ENCODE measurements at regions of chr14 and their contacts with region 1.

Region 1: DNA sequence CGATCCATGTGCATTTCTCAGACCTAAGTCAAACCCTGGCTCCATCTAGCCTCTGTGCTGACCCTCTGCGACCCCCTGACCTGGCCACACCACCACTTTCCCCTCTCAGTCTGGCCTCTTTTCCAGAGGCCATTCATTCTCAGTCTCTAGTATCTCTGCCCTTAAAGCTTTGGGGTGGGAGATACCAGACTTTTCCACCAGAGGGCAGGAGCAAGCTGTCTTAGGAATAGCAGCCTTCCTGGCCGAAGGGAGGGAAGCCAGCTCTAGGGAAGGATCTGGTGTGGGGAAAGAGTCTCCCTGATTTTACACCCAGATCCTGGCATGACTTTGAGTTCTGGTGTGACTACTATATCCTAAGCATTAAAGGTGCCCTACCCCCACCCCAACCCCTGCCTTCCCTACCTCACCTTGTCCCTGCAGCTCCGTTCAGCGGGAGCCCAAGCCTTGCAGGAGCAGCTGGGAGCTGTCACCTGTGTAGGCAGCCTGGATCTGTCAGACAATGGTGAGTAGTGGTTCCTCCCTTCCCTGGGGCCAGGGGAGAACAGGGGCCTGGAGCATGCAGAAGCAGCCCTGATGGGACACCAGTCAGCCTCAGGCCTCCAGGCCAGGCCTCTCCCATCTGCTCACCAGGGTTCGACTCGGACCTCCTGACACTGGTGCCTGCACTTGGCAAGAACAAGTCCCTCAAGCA is 6.6 kb downstream of the CARMIL3 start:
- DNase-seq: peak; percentile 22 to 70 (median 49)
- ATAC-seq: peak; percentile 84
- H3K4me3 ChIP-seq: no peak overlapping the region
- H3K4me3 Mint-ChIP-seq: no peak overlapping the region
- H3K27ac ChIP-seq: no peak overlapping the region
- H3K27ac Mint-ChIP-seq: peak overlapping the region in 5 of 9 donors; percentile 22 to 80 (median 67)
- H3K4me1 ChIP-seq: no peaks in the 10 kb centered on the region
- H3K4me1 Mint-ChIP-seq: peaks cover 0 to 8% (median 2%) of the 10 kb centered on the region in 7 donors
- H3K27me3 ChIP-seq: no peaks in the 10 kb centered on the region
- H3K27me3 Mint-ChIP-seq: peaks cover 0 to 8% (median 2%) of the 10 kb centered on the region in 5 donors

Region 2: DNA sequence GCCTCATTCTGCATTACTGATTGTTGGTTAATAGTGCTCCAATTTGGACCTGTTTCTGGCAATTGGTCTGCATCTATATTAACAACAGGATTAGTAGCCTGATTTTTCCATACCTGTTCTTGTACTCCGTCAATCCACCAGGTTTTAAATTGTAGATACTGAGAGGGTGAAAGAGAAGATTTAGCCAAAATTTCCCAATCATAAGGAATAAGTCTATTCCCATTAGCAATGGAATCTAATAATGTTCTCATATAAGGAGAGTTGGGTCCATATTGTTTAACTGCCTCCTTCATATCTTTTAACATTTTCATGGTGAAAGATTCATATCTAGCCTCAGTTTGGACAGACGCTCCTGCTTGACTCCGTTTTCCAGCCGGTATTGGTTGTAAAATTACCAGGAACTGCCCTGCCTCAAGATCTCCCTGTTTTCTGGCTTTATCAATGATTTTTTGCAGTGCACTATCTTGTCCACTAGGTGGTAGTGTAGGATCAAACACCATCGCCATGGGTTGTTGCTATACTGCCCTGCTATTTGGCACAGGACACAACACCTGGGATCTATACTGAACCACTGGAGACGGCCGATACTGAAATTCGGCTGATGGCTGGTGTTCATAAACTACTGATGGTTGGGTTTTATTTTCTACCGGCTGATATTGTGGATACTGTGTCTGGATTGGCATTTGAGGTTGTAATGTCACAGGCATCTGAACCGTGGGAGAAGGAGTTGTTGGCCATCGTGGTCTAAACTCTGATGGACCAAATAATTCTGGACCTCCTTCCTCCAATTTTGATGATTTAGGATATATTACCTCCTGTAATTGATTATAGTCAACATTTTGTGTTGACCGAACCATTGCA is 44.5 kb before region 1 on chr14:
- CTCF ChIA-PET with region 1: interaction called, 3 read pairs
- POLR2A ChIA-PET with region 1: no interaction called
- intact Hi-C with region 1: loop called in 1 of 2 experiments (anchors 1 kb)
- DNase-seq: peak in 8 of 9 donors; percentile 17 to 76 (median 67)
- ATAC-seq: peak; percentile 94
- H3K4me3 ChIP-seq: no peak overlapping the region
- H3K4me3 Mint-ChIP-seq: no peak overlapping the region
- H3K27ac ChIP-seq: no peak overlapping the region
- H3K27ac Mint-ChIP-seq: no peak overlapping the region
- H3K4me1 ChIP-seq: peaks cover 0 to 6% of the 10 kb centered on the region in 2 donors
- H3K4me1 Mint-ChIP-seq: peaks cover 8 to 28% (median 25%) of the 10 kb centered on the region in 7 donors
- H3K27me3 ChIP-seq: no peaks in the 10 kb centered on the region
- H3K27me3 Mint-ChIP-seq: peaks cover 0 to 15% (median 0%) of the 10 kb centered on the region in 5 donors

Region 3: GRCh38 chr14:24123508-24124417 is 65.4 kb after region 1 on chr14:
- CTCF ChIA-PET with region 1: no interaction called
- POLR2A ChIA-PET with region 1: no interaction called
- intact Hi-C with region 1: no loop called
- DNase-seq: no peak
- ATAC-seq: peak; percentile 38
- H3K4me3 ChIP-seq: no peak overlapping the region
- H3K4me3 Mint-ChIP-seq: no peak overlapping the region
- H3K27ac ChIP-seq: no peak overlapping the region
- H3K27ac Mint-ChIP-seq: peak overlapping the region in 7 of 9 donors; percentile 27 to 52 (median 40)
- H3K4me1 ChIP-seq: no peaks in the 10 kb centered on the region
- H3K4me1 Mint-ChIP-seq: peaks cover 0 to 11% (median 5%) of the 10 kb centered on the region in 7 donors
- H3K27me3 ChIP-seq: no peaks in the 10 kb centered on the region
- H3K27me3 Mint-ChIP-seq: no peaks in the 10 kb centered on the region

Region 4: GRCh38 chr14:24351517-24351916 is 293.1 kb after region 1 on chr14:
- CTCF ChIA-PET with region 1: no interaction called
- POLR2A ChIA-PET with region 1: no interaction called
- intact Hi-C with region 1: no loop called
- DNase-seq: no peak
- ATAC-seq: no peak
- H3K4me3 ChIP-seq: no peak overlapping the region
- H3K4me3 Mint-ChIP-seq: no peak overlapping the region
- H3K27ac ChIP-seq: no peak overlapping the region
- H3K27ac Mint-ChIP-seq: no peak overlapping the region
- H3K4me1 ChIP-seq: no peaks in the 10 kb centered on the region
- H3K4me1 Mint-ChIP-seq: peaks cover 0 to 2% (median 0%) of the 10 kb centered on the region in 7 donors
- H3K27me3 ChIP-seq: peaks cover 0 to 7% of the 10 kb centered on the region in 2 donors
- H3K27me3 Mint-ChIP-seq: peaks cover 34 to 60% (median 45%) of the 10 kb centered on the region in 5 donors

Measured in naive thymus-derived CD4-positive, alpha-beta T cell (primary cell).